AG04450 (cell line): ENCODE measurements at regions of chr17 and their contacts with region 1.

Region 1: GRCh38 chr17:7997186-7997585 is 5.2 kb upstream of the GUCY2D start:
- DNase-seq: no peak
- H3K4me3 ChIP-seq: no peak overlapping the region
- H3K27ac ChIP-seq: no peak overlapping the region
- H3K27me3 ChIP-seq: peaks cover 36% of the 10 kb centered on the region
- CTCF ChIP-seq: peak; percentile 55

Region 2: DNA sequence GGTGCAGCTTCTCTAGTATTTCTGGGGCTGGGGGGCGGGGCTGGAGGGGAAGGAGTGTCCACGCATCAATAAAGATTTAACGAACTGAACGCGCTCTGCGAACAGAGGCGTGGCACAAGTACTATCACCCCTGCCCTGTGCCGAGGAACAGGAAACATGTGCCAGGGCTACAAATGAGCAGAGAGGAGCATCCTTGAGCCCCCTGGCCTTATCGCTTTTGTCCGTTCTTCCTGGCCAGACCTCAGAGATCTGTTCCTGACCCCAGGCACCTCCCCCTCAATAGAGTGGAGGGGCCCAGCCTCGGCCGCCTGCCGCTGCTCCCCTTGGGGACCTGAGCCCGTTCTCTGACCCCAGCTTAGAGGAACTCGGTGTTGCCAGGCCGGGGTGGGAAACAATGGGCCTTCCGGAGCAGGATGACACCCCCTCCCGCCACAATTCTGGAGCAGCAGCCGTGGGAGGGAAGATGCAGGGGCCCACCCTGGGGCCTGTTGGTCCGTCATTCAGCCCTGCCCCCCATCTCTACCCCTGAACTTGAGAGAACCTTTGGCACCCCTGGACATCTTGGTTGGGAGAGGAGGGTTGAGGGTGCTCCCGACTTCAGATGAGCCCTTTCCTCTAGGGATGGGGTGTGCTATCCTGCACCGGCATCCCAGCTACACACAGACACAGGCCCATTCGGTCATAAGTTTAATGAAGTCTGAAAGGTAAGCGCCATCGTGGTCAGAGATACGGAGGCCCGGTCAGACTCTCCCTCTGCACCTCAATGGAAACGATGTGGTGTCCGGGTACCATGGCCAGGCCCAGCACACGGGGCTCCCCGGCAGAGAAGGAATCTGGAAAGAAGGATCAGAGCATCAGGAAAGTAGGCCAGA is 140.9 kb before region 1 on chr17:
- CTCF ChIA-PET with region 1: no interaction called
- POLR2A ChIA-PET with region 1: no interaction called
- DNase-seq: no peak
- H3K4me3 ChIP-seq: peak overlapping the region; percentile 81
- H3K27ac ChIP-seq: peak overlapping the region; percentile 91
- H3K27me3 ChIP-seq: no peaks in the 10 kb centered on the region
- CTCF ChIP-seq: no peak

Region 3: GRCh38 chr17:7887482-7888183 is 109.6 kb before region 1 on chr17:
- CTCF ChIA-PET with region 1: no interaction called
- POLR2A ChIA-PET with region 1: no interaction called
- DNase-seq: peak; percentile 96
- H3K4me3 ChIP-seq: peak overlapping the region; percentile 79
- H3K27ac ChIP-seq: peak overlapping the region; percentile 77
- H3K27me3 ChIP-seq: no peaks in the 10 kb centered on the region
- CTCF ChIP-seq: no peak

Region 4: GRCh38 chr17:7982171-7982570 is 15.0 kb before region 1 on chr17:
- CTCF ChIA-PET with region 1: interaction called, 35 read pairs
- POLR2A ChIA-PET with region 1: no interaction called
- DNase-seq: no peak
- H3K4me3 ChIP-seq: no peak overlapping the region
- H3K27ac ChIP-seq: no peak overlapping the region
- H3K27me3 ChIP-seq: no peaks in the 10 kb centered on the region
- CTCF ChIP-seq: no peak

Region 5: DNA sequence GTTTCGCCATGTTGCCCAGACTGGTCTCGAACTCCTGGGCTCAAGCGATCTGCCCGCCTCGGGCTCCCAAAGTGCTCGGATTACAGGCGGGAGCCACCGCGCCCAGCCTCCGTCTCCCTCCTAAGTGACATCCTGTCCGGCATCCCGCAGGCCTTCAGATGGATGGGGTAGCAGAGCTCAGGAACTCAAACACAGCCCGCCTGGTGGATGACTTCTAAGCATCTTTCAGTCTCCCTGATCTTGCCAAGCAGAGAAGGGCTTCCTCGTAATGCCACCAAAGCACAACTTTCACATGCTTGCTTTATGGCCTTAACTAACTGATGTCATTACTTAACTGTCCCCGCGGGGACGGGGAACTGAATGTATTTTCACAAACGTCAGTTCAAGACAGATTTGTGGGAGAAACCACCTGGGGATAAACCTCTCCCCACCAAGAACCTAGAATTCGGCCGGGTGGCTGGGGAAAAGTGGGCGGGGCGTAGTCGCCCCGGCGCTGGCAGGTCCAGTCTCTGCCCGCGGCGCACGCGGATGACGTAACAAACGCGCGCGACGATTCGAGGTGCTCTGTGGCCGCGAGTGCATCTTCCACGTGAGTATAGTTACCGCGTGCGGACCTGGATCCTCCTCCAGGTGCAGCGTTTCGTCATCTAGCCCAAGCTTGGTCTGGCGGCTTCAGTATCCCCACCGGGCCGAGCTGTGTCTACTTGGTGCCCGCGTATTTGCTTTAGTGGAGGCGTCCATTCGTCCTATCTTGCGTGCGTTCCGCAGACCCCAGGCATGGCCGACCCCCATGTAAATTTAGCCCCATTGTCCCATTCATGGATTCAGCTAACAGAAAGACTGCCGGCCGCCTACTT is 251.8 kb after region 1 on chr17 and contains the start of gene PFAS:
- CTCF ChIA-PET with region 1: no interaction called
- POLR2A ChIA-PET with region 1: no interaction called
- DNase-seq: peak; percentile 74
- H3K4me3 ChIP-seq: peak within 1 kb of the TSS; percentile 98
- H3K27ac ChIP-seq: peak within 1 kb of the TSS; percentile 93
- H3K27me3 ChIP-seq: no peaks in the 10 kb centered on the region
- CTCF ChIP-seq: no peak; the same call in 1 of the 2 replicates
- polyA plus RNA-seq, gene PFAS: 14.0 and 18.5 TPM in 2 replicates